ENCODE measurements at regions of chr12 and their contacts with region 1.

Region 1: DNA sequence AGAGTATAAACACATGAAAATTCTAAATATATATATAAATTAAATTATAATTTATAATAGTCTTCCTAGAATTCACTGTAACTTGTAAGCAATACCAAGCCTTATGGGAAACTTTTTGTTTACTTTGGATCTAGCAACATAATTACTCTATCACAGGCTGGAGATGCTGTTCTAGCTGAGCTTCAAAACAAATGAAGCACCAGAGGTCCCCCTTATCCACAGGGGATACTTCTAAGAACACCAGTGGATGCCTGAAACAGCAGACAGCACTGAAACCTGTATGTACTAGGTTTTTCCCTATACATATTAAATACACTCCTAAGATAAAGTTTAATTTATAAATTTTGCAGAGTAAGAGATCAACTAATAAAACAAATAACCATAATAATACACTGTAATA is 96.6 kb downstream of the CDK17 start:
- DNase-seq: no peak
- ATAC-seq: no peak
- H3K4me3 ChIP-seq: no peak overlapping the region
- H3K27ac ChIP-seq: no peak overlapping the region
- H3K4me1 ChIP-seq: peaks cover 2% of the 10 kb centered on the region; the same call in 1 of the 2 replicates
- H3K27me3 ChIP-seq: no peaks in the 10 kb centered on the region
- CTCF ChIP-seq: no peak

Region 2: DNA sequence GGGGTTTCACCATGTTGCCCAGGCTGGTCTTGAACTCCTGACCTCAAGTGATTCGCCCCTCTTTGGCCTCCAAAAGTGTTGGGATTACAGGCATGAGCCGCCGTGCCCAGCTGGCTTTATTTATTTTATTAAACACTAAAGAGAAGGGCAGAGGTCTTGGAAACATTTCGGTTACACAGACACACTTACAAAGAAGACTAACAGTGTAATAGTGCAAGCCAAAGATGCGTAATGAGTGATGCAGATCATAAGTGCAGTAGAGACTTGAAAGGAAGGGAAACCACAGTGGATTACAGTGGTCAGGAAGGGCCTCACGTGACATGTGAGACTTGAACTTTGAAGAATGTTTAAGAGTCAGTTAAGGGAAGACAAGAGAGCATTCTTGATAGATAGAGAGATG is 130.5 kb after region 1 on chr12:
- CTCF ChIA-PET with region 1: no interaction called
- POLR2A ChIA-PET with region 1: interaction called, 12 read pairs
- in situ Hi-C with region 1: no loop called
- intact Hi-C with region 1: no loop called
- DNase-seq: no peak
- ATAC-seq: peak; percentile 53; the same call in 1 of the 2 replicates
- H3K4me3 ChIP-seq: no peak overlapping the region
- H3K27ac ChIP-seq: no peak overlapping the region
- H3K4me1 ChIP-seq: no peaks in the 10 kb centered on the region
- H3K27me3 ChIP-seq: no peaks in the 10 kb centered on the region
- CTCF ChIP-seq: no peak